ENCODE measurements at regions of chr21 and their contacts with region 1.

Region 1: DNA sequence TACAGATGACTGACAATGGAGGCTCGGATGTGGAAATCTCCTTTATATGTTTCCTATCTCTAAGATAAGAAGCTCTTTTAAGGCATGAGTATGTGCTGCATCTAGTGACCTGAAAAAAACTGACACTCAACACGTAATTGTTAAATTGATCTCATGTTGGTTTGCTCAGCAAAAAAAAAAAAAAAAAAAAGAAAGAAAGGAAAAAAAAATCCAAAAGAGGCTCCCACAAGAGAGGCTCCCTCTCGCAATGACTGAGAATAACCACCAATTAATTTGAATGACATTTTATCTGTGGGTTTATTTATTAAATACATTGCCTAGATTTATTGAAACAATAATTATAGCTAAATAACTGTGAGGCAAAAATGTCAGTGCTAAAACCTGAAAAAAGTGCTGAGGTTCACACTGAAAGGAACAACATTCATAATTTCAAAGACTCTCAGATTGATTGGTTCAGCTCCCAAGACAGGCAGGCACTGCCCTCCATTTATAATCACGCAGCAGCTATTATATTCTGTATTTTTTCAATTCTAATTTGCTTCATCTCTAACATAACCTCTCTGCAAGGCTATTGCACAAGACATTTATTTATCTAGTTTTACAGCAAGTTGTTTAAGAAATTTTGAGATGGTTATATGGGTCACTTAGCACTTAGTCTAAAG is 184.5 kb upstream of the TMPRSS15 start:
- DNase-seq: no peak
- H3K4me3 ChIP-seq: no peak overlapping the region
- H3K27ac ChIP-seq: no peak overlapping the region
- H3K4me1 ChIP-seq: no peaks in the 10 kb centered on the region
- H3K27me3 ChIP-seq: no peaks in the 10 kb centered on the region
- CTCF ChIP-seq: no peak
- EP300 ChIP-seq: no peak
- POLR2A ChIP-seq: no peak

Region 2: DNA sequence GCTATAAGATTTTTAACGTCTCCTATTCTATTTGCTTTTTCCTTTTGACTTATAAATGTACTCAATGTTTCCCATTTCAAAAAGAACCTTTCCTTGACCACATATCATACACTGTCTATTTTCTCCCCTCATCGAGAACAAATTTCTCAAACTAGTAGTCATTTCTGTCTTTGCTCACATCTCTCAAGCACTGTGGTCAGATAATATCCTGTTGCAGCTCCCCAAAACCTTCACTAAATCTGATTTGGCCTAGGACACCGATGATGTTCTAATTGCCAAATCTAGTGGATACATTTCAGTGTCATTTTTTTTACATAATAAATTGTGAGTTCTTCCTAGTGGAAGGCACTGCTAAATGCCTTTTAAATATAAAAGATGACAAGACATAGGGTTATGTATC is 1055.8 kb before region 1 on chr21:
- in situ Hi-C with region 1: no loop called
- intact Hi-C with region 1: loop called (anchors 5 kb)
- DNase-seq: no peak
- H3K4me3 ChIP-seq: no peak overlapping the region
- H3K27ac ChIP-seq: no peak overlapping the region
- H3K4me1 ChIP-seq: peaks cover 0 to 15% (median 9%) of the 10 kb centered on the region in 4 donors
- H3K27me3 ChIP-seq: no peaks in the 10 kb centered on the region
- CTCF ChIP-seq: no peak
- EP300 ChIP-seq: no peak
- POLR2A ChIP-seq: no peak

Region 3: GRCh38 chr21:18164933-18165332 is 423.2 kb before region 1 on chr21:
- in situ Hi-C with region 1: no loop called
- intact Hi-C with region 1: no loop called
- DNase-seq: no peak
- H3K4me3 ChIP-seq: no peak overlapping the region
- H3K27ac ChIP-seq: no peak overlapping the region
- H3K4me1 ChIP-seq: no peaks in the 10 kb centered on the region
- H3K27me3 ChIP-seq: no peaks in the 10 kb centered on the region
- CTCF ChIP-seq: no peak
- EP300 ChIP-seq: no peak
- POLR2A ChIP-seq: no peak

Measured in transverse colon (tissue), 4 donors.